AG04449 (cell line): ENCODE measurements at regions of chr15 and their contacts with region 1.

Region 1: DNA sequence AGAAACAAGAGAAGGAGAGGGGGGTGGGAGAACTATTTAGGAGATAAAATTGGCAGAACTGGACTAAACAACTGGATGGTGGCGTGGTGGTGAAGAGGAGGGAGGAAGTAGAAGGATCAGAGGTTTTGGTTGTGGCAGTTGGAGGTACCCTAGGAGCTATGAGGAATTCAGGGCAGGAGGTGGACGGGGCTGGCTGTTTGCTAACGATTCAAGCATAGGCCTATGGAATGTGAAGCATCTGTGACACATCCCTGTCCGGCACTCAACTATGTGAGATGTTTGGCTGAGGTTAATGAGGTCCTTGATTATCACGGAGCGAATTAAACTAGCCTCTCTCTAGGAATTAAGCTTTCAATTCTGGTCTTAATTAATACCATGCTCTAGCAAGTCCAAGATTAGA is 13.5 kb downstream of the TARS3 start:
- DNase-seq: peak; percentile 28
- H3K4me3 ChIP-seq: no peak overlapping the region
- CTCF ChIP-seq: no peak

Region 2: DNA sequence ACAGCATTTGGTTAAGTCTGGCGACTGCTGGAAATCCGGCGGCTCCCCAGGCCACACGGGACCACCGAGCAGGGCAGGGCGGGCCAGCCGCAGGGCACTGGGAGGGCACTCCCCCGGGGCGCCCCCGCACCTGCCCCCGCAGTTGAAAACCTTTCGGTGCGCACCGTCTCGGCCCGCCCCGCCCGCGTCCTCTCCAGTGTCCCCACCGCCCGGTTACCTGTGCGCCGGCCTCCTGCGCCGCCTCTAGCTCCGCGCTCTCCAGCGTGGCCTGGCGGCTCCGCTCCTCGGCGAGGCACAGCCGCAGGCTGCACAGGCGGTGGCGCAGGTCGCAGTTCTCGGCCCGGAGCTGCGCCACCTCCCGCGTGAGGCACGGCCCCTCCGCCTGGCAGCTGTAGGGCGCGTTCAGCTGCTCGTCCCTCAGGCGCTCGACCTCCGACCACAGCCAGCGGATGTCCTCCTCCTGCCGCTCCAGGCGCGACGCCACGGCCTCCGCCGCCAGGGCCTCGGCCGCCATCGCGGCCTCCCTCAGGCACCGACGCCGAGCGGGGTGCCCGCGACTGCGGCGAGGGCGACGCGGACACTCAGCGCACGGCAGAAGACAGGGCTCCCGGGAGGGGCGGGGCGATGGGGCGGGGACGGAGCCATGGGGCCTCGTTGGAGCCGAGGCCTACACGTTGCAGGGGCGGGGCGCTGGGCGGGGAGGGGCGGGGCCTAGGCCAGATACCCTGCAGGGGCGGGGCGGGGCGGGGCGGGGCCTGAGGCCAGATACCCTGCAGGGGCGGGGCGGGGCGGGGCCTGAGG is 13.3 kb after region 1 on chr15 and contains the start of gene TARS3:
- CTCF ChIA-PET with region 1: interaction called, 7 read pairs
- POLR2A ChIA-PET with region 1: interaction called, 10 read pairs
- DNase-seq: no peak
- H3K4me3 ChIP-seq: peak within 1 kb of the TSS; percentile 80
- CTCF ChIP-seq: peak; percentile 24